ENCODE measurements at regions of chr18 and their contacts with region 1.

Region 1: DNA sequence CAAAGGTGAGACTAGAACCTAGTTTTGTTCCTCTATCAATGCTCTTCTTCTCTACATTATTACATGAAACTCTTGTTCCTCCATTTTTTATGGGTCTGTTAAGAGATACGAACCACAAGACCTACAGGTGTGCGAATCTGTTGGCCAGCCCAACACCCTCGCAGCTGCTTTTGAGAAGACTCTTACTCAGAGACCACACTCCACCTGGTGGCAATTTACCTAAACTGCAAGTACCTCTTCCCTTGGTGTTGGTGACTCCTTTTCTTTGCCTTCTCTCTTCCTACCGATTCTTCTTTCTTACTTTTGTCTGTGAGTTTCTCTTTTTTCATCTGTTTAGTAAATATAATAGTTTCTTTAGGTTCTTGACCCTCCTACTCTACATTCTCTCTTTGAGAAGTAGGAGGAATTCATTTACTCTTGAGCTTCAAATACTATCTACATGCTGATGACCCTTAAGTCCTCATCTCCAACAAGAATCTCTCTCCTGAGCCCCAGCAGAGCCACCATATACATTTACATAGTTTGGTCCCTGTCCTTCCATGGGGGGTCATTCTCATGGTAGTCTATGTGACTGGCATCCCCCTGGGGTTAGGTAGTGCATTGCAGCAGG is 81.8 kb upstream of the GAREM1 start:
- DNase-seq: peak; percentile 69 to 84 (median 78)
- H3K4me3 ChIP-seq: no peak overlapping the region
- H3K27ac ChIP-seq: no peak overlapping the region
- H3K4me1 ChIP-seq: no peaks in the 10 kb centered on the region
- H3K27me3 ChIP-seq: peaks cover 0 to 6% (median 0%) of the 10 kb centered on the region in 5 experiments

Region 2: GRCh38 chr18:32276906-32277305 is 275.6 kb before region 1 on chr18:
- CTCF ChIA-PET with region 1: interaction called, 13 read pairs
- POLR2A ChIA-PET with region 1: no interaction called
- DNase-seq: no peak
- H3K4me3 ChIP-seq: no peak overlapping the region
- H3K27ac ChIP-seq: no peak overlapping the region
- H3K4me1 ChIP-seq: no peaks in the 10 kb centered on the region
- H3K27me3 ChIP-seq: peaks cover 0 to 4% (median 0%) of the 10 kb centered on the region in 5 experiments

Region 3: DNA sequence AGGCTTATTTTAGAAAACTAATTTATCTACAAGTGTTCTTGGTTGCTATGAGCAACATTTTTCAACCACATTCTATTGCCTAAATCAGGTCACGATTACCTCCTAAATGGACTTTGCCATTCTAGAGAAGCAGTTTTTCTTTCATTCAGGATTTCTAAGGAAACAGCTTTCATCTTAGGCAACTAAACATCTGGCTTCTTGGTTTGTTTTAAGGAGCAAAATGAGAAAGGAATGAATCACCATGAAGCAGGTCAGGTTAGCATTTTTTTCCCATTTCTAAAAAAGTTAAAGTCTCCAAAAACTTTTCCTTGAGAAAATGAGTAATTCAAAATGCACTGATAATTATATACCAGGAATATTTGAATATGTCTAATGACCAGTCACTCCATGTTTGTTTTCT is 196.6 kb before region 1 on chr18:
- CTCF ChIA-PET with region 1: no interaction called
- POLR2A ChIA-PET with region 1: no interaction called
- DNase-seq: no peak
- H3K4me3 ChIP-seq: no peak overlapping the region
- H3K27ac ChIP-seq: no peak overlapping the region
- H3K4me1 ChIP-seq: no peaks in the 10 kb centered on the region
- H3K27me3 ChIP-seq: no peaks in the 10 kb centered on the region

Measured in common myeloid progenitor, CD34-positive (primary cell).